Posterior cingulate gyrus (tissue), 11 donors: ENCODE measurements at regions of chr7 and their contacts with region 1.

Region 1: GRCh38 chr7:10412422-10413019 is 561.2 kb upstream of the PHF14 start:
- DNase-seq: peak in 3 of 10 donors; percentile 13 to 43 (median 22)

Region 2: DNA sequence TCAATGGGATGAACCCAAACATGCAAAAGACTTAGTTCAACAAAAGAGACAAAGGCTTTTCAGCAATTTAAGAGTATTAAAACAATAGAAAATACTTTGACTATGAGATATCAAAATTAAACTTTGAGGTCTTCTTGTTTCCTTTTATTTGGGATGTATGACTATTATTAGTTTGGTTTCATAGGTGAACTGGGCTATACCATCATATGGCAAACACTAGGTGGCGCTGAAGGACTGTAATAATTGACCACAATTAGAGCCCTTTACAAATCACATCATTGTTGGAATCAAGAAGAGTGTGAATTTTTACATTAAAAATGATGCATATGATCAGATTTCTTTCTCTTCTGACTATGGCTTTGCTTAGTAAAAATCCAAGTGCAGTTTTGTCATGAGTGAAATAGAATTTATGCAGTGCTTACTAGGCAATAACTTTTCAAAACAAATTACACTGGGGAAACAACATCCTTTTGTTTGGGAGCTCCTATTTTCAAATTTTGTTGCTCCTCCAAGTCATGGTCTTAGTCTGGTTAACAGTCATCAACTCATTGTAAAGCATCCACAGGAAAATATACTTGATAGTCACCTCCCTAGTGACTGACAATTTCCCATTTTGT is 1993.8 kb before region 1 on chr7:
- intact Hi-C with region 1: loop called (anchors 5 kb)
- DNase-seq: peak in 4 of 10 donors; percentile 42 to 72 (median 50)

Region 3: DNA sequence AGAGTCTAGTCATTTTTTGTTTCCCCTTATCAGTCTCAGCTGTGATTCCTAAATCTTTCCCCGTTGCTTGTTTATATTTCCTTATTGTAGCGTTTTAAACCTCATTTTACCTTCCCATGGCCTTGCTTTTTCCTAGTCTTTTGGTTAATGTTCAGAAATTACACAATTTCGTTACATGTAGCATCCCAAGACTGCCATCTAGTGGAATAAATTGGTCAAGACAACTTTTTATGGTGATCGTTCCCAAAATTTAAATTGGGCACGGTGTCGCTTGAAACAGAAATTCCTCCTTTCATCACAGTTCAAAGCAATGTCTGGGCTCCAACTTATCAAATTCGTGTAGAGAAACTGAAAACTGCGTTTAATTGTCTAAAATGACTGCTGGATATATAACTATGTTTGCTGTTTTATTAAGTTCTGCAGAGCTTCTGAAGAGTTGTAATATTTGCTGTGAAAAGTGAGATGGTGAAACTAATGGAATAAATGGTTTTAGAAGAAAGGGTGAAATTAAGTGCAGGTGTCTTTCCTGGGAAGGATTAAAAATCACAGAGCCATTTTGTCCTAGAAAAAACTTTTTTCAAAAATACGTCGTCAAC is 931.4 kb after region 1 on chr7:
- intact Hi-C with region 1: loop called (anchors 5 kb)
- DNase-seq: no peak